Activated CD4-positive, alpha-beta T cell treated with anti-CD3 and anti-CD28 coated beads, Interleukin-2, amount 10 ng/mL, durations not matched to agents 24 days and 14 days (primary cell): ENCODE measurements at regions of chr9 and their contacts with region 1.

Region 1: DNA sequence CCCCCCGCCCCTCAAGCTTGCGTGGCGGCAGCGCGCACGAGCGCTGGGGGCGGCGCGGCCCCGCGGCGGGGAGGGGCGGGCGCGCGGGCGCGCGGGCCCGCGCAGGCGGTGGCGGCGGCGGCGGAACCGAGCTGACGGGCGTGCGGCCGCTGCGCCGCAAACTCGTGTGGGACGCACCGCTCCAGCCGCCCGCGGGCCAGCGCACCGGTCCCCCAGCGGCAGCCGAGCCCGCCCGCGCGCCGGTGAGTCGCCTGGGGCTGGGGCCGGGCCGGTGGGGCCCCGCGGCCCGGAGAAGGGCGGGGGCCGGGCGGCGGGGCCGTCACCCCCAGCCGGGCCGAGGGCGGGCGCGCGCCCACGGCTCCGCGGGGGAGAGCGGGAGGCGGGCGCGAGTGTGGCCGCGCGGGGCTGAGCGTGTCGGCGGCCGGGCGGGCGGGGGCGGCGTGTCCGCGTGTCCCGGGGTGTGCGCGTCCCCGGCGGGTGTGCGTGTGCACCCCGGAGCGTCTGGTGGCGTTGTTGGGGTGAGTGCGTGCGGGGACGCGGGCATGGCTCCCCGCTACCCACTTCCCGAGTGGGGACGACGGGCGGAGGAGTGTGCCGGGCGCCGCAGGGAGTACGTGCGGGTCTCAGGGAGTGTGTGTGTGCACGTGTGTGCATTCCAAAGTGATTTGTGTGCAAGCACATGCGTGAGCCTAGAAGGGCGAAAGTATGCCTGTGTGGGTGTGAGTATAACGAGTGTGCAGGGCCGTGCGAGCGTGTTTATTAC is at the start of gene NEK6:
- DNase-seq: peak; percentile 77
- H3K4me3 Mint-ChIP-seq: peak within 1 kb of the TSS; percentile 94
- H3K27ac Mint-ChIP-seq: peak within 1 kb of the TSS; percentile 93
- H3K4me1 Mint-ChIP-seq: peaks cover 58% of the 10 kb centered on the region
- H3K27me3 Mint-ChIP-seq: peaks cover 47% of the 10 kb centered on the region
- total RNA-seq, gene NEK6: 26.4 and 32.5 TPM in 2 replicates

Region 2: GRCh38 chr9:124126571-124127289 is 131.3 kb before region 1 on chr9:
- intact Hi-C with region 1: loop called (anchors 2 kb)
- DNase-seq: peak; percentile 93
- H3K4me3 Mint-ChIP-seq: no peak overlapping the region
- H3K27ac Mint-ChIP-seq: peak overlapping the region; percentile 57
- H3K4me1 Mint-ChIP-seq: peaks cover 6% of the 10 kb centered on the region
- H3K27me3 Mint-ChIP-seq: peaks cover 2% of the 10 kb centered on the region

Region 3: GRCh38 chr9:124202447-124202971 is 55.5 kb before region 1 on chr9:
- intact Hi-C with region 1: loop called (anchors 1 kb)
- DNase-seq: peak; percentile 91
- H3K4me3 Mint-ChIP-seq: peak overlapping the region; percentile 75
- H3K27ac Mint-ChIP-seq: peak overlapping the region; percentile 94
- H3K4me1 Mint-ChIP-seq: peaks cover 65% of the 10 kb centered on the region
- H3K27me3 Mint-ChIP-seq: no peaks in the 10 kb centered on the region

Region 4: GRCh38 chr9:124210697-124211096 is 47.3 kb before region 1 on chr9:
- intact Hi-C with region 1: loop called (anchors 2 kb)
- DNase-seq: no peak
- H3K4me3 Mint-ChIP-seq: peak overlapping the region; percentile 17
- H3K27ac Mint-ChIP-seq: peak overlapping the region; percentile 75
- H3K4me1 Mint-ChIP-seq: peaks cover 67% of the 10 kb centered on the region
- H3K27me3 Mint-ChIP-seq: no peaks in the 10 kb centered on the region

Region 5: DNA sequence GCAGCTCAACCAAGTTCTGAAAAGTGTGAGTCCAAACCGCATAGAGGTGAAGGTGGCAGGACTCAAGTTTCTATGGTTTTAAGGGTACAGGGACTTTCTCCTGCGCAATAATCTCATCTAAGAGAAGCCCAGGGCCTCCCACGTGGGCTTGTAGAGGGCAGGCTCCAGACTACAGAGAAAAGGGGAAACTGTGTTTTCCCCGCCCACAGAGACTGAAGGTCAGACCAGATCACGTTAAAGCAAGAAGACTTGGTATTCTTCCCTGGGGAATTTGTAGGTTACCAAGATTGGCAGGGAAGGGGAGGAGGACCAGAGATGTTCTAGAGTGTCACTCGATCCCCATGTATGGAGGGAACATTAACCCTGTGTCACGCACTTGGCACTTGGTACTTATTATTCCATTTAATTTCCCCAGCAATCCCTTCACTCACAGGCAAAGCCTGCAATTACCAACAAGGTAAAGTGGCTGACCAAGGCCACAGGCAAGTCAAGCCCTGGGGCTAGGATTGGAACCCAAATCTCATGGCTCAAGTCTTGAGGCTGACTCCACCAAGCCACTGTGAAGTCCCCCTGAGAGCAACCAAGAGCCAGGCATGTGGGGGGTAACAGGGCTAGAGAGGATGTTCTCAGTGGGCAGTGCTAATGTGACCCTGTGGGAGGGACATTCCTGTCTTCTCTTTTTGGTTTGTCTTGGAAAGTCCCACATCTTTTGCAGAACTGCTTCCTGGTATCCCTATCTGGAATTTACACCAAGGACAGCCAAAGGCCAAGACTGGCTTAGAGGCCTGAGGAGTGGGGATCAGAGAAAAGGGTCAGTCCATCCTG is 18.6 kb before region 1 on chr9:
- intact Hi-C with region 1: loop called (anchors 1 kb)
- DNase-seq: no peak
- H3K4me3 Mint-ChIP-seq: peak overlapping the region; percentile 60
- H3K27ac Mint-ChIP-seq: peak overlapping the region; percentile 66
- H3K4me1 Mint-ChIP-seq: peaks cover 39% of the 10 kb centered on the region
- H3K27me3 Mint-ChIP-seq: peaks cover 12% of the 10 kb centered on the region

Region 6: DNA sequence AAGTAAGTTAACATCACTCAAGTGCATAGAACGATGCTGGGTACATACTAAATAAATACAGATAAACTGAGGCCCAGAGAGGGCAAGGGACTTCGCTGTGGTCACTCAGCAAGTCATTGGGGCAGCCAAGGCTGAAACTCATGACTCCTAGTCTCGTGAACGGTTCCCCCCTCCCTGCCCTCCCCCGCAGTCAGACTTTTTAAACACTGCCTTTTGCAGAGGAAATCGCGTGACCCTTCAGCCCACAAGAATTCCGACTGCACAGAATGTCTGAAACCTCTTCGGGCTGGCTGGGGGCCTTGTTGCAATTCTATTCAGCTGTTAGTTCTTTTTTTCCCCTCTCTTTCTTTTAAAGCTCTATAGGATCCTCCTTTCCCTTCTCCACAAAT is 27.9 kb after region 1 on chr9:
- intact Hi-C with region 1: loop called (anchors 2 kb)
- DNase-seq: peak; percentile 73
- H3K4me3 Mint-ChIP-seq: peak overlapping the region; percentile 83
- H3K27ac Mint-ChIP-seq: peak overlapping the region; percentile 85
- H3K4me1 Mint-ChIP-seq: peaks cover 26% of the 10 kb centered on the region
- H3K27me3 Mint-ChIP-seq: no peaks in the 10 kb centered on the region

Region 7: DNA sequence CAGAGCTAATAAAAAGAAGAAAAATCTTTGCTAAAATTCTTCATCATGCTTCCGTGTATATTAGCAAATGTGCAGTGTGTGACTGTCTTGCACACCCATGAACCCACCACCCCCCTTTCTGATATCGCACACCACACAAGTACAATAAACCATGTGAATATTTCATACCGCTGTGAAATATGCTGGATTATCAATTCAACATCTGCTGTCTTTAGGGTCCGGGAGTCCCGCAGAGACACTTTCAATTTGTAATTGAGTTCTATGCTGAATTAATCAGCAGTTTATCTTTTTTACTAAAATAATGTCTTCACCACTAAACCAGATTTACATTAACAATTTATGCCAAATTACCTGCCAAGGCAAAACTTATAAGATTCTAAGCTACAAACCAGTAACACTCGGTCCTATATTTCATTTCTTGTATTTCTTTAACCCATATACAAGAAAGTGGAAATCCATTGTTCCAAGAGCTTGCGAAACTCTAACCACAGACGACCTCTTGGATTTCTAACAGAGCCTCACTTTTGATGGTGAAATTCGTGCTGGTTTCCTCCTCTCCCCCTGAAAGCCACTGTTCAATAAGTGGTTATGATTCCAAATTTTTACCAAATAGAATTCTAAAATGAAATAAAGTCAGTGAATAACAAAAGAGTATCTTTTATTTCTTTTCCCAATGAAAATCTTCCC is 113.0 kb after region 1 on chr9:
- intact Hi-C with region 1: no loop called
- DNase-seq: no peak
- H3K4me3 Mint-ChIP-seq: no peak overlapping the region
- H3K27ac Mint-ChIP-seq: no peak overlapping the region
- H3K4me1 Mint-ChIP-seq: peaks cover 22% of the 10 kb centered on the region
- H3K27me3 Mint-ChIP-seq: no peaks in the 10 kb centered on the region